ENCODE measurements at regions of chr20 and their contacts with region 1.

Region 1: GRCh38 chr20:24337069-24337468 is 132.4 kb upstream of the SYNDIG1 start:
- DNase-seq: no peak
- CTCF ChIP-seq: no peak

Region 2: GRCh38 chr20:24176661-24177060 is 160.4 kb before region 1 on chr20:
- in situ Hi-C with region 1: no loop called
- DNase-seq: no peak
- CTCF ChIP-seq: no peak

Region 3: GRCh38 chr20:24241466-24241865 is 95.6 kb before region 1 on chr20:
- in situ Hi-C with region 1: no loop called
- DNase-seq: no peak
- CTCF ChIP-seq: no peak

Region 4: DNA sequence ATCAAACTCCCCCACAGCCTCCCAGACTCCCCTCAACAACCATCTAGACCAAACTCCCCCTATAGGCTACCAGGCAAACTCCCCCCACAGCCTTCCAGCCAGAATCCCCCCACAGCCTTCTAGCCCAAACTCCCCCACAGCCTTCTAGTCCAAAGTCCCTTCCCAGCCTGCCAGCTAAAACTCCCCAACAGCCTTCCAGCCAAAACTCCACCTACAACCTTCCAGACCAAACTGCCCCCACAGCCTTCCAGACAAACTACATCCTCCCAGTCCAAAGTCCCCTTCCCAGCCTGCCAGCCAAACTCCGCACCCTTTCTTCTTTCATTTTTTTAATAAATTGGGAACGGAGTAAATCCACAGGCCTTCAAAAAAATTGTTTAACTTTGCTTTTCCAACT is 95.0 kb after region 1 on chr20:
- in situ Hi-C with region 1: loop called (anchors 25 kb)
- DNase-seq: no peak
- CTCF ChIP-seq: no peak

Measured in GM13976 (cell line).